ENCODE measurements at regions of chr5 and their contacts with region 1.

Region 1: DNA sequence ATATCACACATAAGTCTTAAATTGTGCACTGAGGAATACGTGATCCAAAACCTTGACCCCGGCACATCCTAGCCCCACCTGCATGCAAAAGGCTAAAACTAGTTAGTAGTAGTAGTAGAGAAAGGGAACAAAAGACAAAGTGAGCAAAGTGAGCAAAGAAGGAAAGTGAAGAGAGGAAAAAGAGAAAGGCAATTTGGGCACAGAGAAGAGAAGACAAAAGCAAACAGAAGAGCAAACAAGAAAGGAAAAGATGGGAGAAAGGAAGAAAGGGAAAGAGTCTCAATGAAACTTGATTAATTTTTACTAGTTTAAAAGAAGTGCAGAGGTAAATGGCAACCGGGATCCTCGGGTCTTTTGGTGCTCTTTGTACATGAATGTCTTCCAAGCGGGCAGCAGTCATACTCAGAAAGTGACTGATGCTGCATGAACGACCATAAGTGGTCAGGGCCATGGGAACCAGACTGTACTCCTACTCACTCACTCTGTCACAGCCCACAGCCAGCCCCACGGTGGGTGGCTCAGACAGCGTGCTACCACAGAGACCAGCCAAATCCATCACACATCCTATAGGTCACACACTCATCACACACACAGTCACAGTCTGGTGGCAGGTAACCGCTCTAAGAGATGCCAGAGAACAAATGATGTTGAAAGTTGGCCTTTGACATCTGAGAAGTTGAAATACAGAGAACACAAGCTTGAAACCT is 203.9 kb downstream of the FBN2 start:
- DNase-seq: no peak
- H3K4me3 ChIP-seq: no peak overlapping the region
- H3K27ac ChIP-seq: no peak overlapping the region
- H3K4me1 ChIP-seq: no peaks in the 10 kb centered on the region
- H3K27me3 ChIP-seq: no peaks in the 10 kb centered on the region
- CTCF ChIP-seq: no peak
- EP300 ChIP-seq: no peak
- POLR2A ChIP-seq: no peak

Region 2: GRCh38 chr5:128825826-128826225 is 491.7 kb after region 1 on chr5:
- in situ Hi-C with region 1: no loop called
- intact Hi-C with region 1: loop called (anchors 5 kb)
- DNase-seq: no peak
- H3K4me3 ChIP-seq: no peak overlapping the region
- H3K27ac ChIP-seq: no peak overlapping the region
- H3K4me1 ChIP-seq: no peaks in the 10 kb centered on the region
- H3K27me3 ChIP-seq: no peaks in the 10 kb centered on the region
- CTCF ChIP-seq: no peak
- EP300 ChIP-seq: no peak
- POLR2A ChIP-seq: no peak

Measured in transverse colon (tissue), 4 donors.